Posterior cingulate gyrus (tissue), 11 donors: ENCODE measurements at regions of chr21 and their contacts with region 1.

Region 1: GRCh38 chr21:29114765-29115164 is 15.7 kb upstream of the MAP3K7CL start:
- DNase-seq: no peak

Region 2: GRCh38 chr21:29187944-29188343 is 73.2 kb after region 1 on chr21:
- intact Hi-C with region 1: loop called (anchors 2 kb)
- DNase-seq: no peak

Region 3: GRCh38 chr21:29258626-29259335 is 144.0 kb after region 1 on chr21:
- intact Hi-C with region 1: no loop called
- DNase-seq: no peak